ENCODE measurements at regions of chr15 and their contacts with region 1.

Region 1: DNA sequence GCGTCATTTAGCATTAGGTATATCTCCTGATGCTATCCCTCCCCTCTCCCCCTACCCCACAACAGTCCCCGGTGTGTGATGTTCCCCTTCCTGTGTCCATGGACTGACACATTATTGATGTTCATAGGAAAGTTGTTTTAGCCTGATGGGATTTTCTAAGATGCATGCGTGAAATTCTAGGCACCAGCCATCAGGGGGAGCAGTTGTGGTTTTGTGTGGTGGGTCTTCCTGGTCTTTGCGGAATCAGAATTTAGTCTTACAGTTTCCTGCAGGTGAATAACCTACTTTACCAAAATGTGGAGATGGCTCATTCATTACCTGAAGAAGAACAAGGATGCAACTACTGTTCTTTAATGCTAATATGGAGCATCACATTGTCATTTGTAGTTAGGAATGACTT is 455.0 kb upstream of the THBS1 start:
- DNase-seq: peak; percentile 62
- ATAC-seq: no peak
- H3K4me3 ChIP-seq: no peak overlapping the region
- H3K27ac ChIP-seq: no peak overlapping the region
- H3K4me1 ChIP-seq: peaks cover 56% of the 10 kb centered on the region
- H3K27me3 ChIP-seq: no peaks in the 10 kb centered on the region
- CTCF ChIP-seq: peak; percentile 66
- EP300 ChIP-seq: no peak
- POLR2A ChIP-seq: no peak
- RAD21 ChIP-seq: peak; percentile 54; the same call in 1 of the 2 replicates

Region 2: GRCh38 chr15:39171944-39172368 is 46.1 kb after region 1 on chr15:
- CTCF ChIA-PET with region 1: interaction called, 3 read pairs
- POLR2A ChIA-PET with region 1: interaction called, 5 read pairs
- in situ Hi-C with region 1: no loop called
- intact Hi-C with region 1: loop called (anchors 1 kb)
- DNase-seq: peak; percentile 85
- ATAC-seq: peak; percentile 94
- H3K4me3 ChIP-seq: no peak overlapping the region; a peak in 1 of 6 replicates
- H3K27ac ChIP-seq: no peak overlapping the region
- H3K4me1 ChIP-seq: peaks cover 50% of the 10 kb centered on the region
- H3K27me3 ChIP-seq: no peaks in the 10 kb centered on the region
- CTCF ChIP-seq: peak; percentile 89
- EP300 ChIP-seq: peak in 1 of 2 experiments; percentile 11; a peak in 1 of 4 replicates
- POLR2A ChIP-seq: no peak
- RAD21 ChIP-seq: peak; percentile 84

Region 3: GRCh38 chr15:39273717-39274411 is 148.0 kb after region 1 on chr15:
- CTCF ChIA-PET with region 1: no interaction called
- POLR2A ChIA-PET with region 1: interaction called, 4 read pairs
- in situ Hi-C with region 1: loop called (anchors 10 kb)
- intact Hi-C with region 1: loop called (anchors 1 kb)
- DNase-seq: peak; percentile 100
- ATAC-seq: peak; percentile 90
- H3K4me3 ChIP-seq: peak overlapping the region in 2 of 3 experiments; percentile 22 to 29; a peak in 1 of 6 replicates
- H3K27ac ChIP-seq: peak overlapping the region; percentile 85
- H3K4me1 ChIP-seq: peaks cover 83% of the 10 kb centered on the region
- H3K27me3 ChIP-seq: no peaks in the 10 kb centered on the region
- CTCF ChIP-seq: no peak
- EP300 ChIP-seq: peak; percentile 86 to 96
- POLR2A ChIP-seq: no peak
- RAD21 ChIP-seq: no peak

Region 4: GRCh38 chr15:39312984-39313383 is 187.1 kb after region 1 on chr15:
- CTCF ChIA-PET with region 1: no interaction called
- POLR2A ChIA-PET with region 1: no interaction called
- in situ Hi-C with region 1: no loop called
- intact Hi-C with region 1: loop called (anchors 5 kb)
- DNase-seq: peak; percentile 77
- ATAC-seq: peak; percentile 95
- H3K4me3 ChIP-seq: no peak overlapping the region
- H3K27ac ChIP-seq: no peak overlapping the region
- H3K4me1 ChIP-seq: peaks cover 14% of the 10 kb centered on the region
- H3K27me3 ChIP-seq: no peaks in the 10 kb centered on the region
- CTCF ChIP-seq: peak; percentile 69
- EP300 ChIP-seq: no peak
- POLR2A ChIP-seq: no peak
- RAD21 ChIP-seq: peak; percentile 52; the same call in 1 of the 2 replicates

Region 5: DNA sequence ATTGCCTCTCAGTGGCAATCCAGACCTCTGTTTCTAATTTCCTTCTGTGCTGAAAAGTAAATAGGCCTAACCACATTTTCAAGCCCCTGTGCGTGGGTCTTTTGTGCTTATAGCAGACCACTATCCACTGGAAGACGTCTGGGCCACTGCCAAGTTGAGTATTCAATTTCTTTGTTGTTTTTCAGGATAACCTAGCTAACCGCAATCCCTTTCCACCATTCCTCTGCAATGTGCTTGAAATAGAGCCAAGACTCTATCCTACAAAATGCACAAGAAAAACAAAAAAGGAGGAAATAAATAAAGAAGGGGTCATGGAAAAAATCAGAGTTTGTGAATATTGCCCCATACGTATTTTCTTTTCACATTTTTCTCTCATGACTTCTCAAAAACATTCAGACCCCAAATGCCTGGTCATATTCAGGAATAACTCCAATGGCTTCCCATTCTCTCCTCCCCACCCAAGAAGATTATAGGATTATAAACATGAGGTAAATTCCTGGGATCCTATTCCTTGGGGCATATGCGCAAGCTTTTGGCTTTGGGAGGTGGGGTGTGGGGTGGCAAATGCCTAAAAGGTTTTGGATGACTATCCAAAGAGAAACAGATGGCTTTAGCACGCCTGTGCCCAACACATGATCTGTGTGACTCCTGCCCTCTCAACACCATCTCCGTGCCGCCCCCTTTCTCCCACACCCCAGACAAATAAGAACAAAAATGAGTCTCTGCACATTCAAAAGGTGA is 237.1 kb after region 1 on chr15:
- CTCF ChIA-PET with region 1: no interaction called
- POLR2A ChIA-PET with region 1: no interaction called
- in situ Hi-C with region 1: no loop called
- intact Hi-C with region 1: loop called (anchors 10 kb)
- DNase-seq: no peak
- ATAC-seq: no peak
- H3K4me3 ChIP-seq: no peak overlapping the region
- H3K27ac ChIP-seq: peak overlapping the region; percentile 18
- H3K4me1 ChIP-seq: peaks cover 68% of the 10 kb centered on the region
- H3K27me3 ChIP-seq: no peaks in the 10 kb centered on the region
- CTCF ChIP-seq: no peak
- EP300 ChIP-seq: no peak
- POLR2A ChIP-seq: no peak
- RAD21 ChIP-seq: no peak

Region 6: GRCh38 chr15:39438799-39439592 is 313.1 kb after region 1 on chr15:
- CTCF ChIA-PET with region 1: no interaction called
- POLR2A ChIA-PET with region 1: no interaction called
- in situ Hi-C with region 1: no loop called
- intact Hi-C with region 1: loop called (anchors 5 kb)
- DNase-seq: peak; percentile 34
- ATAC-seq: peak; percentile 50; the same call in 2 of the 3 replicates
- H3K4me3 ChIP-seq: no peak overlapping the region
- H3K27ac ChIP-seq: no peak overlapping the region
- H3K4me1 ChIP-seq: peaks cover 40% of the 10 kb centered on the region
- H3K27me3 ChIP-seq: no peaks in the 10 kb centered on the region
- CTCF ChIP-seq: peak; percentile 40
- EP300 ChIP-seq: no peak
- POLR2A ChIP-seq: no peak
- RAD21 ChIP-seq: no peak

Region 7: GRCh38 chr15:39453500-39454073 is 327.7 kb after region 1 on chr15:
- CTCF ChIA-PET with region 1: no interaction called
- POLR2A ChIA-PET with region 1: no interaction called
- in situ Hi-C with region 1: no loop called
- intact Hi-C with region 1: loop called (anchors 5 kb)
- DNase-seq: no peak
- ATAC-seq: no peak
- H3K4me3 ChIP-seq: no peak overlapping the region
- H3K27ac ChIP-seq: no peak overlapping the region
- H3K4me1 ChIP-seq: peaks cover 52% of the 10 kb centered on the region
- H3K27me3 ChIP-seq: no peaks in the 10 kb centered on the region
- CTCF ChIP-seq: no peak
- EP300 ChIP-seq: no peak
- POLR2A ChIP-seq: no peak
- RAD21 ChIP-seq: no peak

Measured in HepG2 (cell line).